CD4-positive, alpha-beta T cell (primary cell): ENCODE measurements at regions of chr2 and their contacts with region 1.

Region 1: GRCh38 chr2:30404319-30404953 is 42.6 kb upstream of the LCLAT1 start:
- DNase-seq: no peak
- ATAC-seq: no peak
- H3K4me3 ChIP-seq: no peak overlapping the region
- H3K4me3 Mint-ChIP-seq: no peak overlapping the region
- H3K27ac ChIP-seq: no peak overlapping the region
- H3K27ac Mint-ChIP-seq: no peak overlapping the region
- H3K4me1 ChIP-seq: peaks cover 11% of the 10 kb centered on the region
- H3K4me1 Mint-ChIP-seq: peaks cover 45% of the 10 kb centered on the region
- H3K27me3 ChIP-seq: no peaks in the 10 kb centered on the region
- H3K27me3 Mint-ChIP-seq: no peaks in the 10 kb centered on the region
- CTCF ChIP-seq: no peak

Region 2: GRCh38 chr2:30436859-30437435 is 32.5 kb after region 1 on chr2:
- CTCF ChIA-PET with region 1: no interaction called
- POLR2A ChIA-PET with region 1: no interaction called
- intact Hi-C with region 1: no loop called
- DNase-seq: peak in 1 of 14 experiments; percentile 8
- ATAC-seq: no peak
- H3K4me3 ChIP-seq: no peak overlapping the region
- H3K4me3 Mint-ChIP-seq: no peak overlapping the region
- H3K27ac ChIP-seq: peak overlapping the region in 1 of 2 donors; percentile 11
- H3K27ac Mint-ChIP-seq: no peak overlapping the region
- H3K4me1 ChIP-seq: peaks cover 7% of the 10 kb centered on the region
- H3K4me1 Mint-ChIP-seq: peaks cover 18% of the 10 kb centered on the region
- H3K27me3 ChIP-seq: no peaks in the 10 kb centered on the region
- H3K27me3 Mint-ChIP-seq: no peaks in the 10 kb centered on the region
- CTCF ChIP-seq: no peak

Region 3: GRCh38 chr2:30455114-30455738 is 50.8 kb after region 1 on chr2:
- CTCF ChIA-PET with region 1: no interaction called
- POLR2A ChIA-PET with region 1: no interaction called
- intact Hi-C with region 1: loop called in 1 of 2 experiments (anchors 10 kb)
- DNase-seq: no peak
- ATAC-seq: no peak
- H3K4me3 ChIP-seq: no peak overlapping the region
- H3K4me3 Mint-ChIP-seq: no peak overlapping the region
- H3K27ac ChIP-seq: no peak overlapping the region
- H3K27ac Mint-ChIP-seq: no peak overlapping the region
- H3K4me1 ChIP-seq: peaks cover 19% of the 10 kb centered on the region
- H3K4me1 Mint-ChIP-seq: peaks cover 68% of the 10 kb centered on the region
- H3K27me3 ChIP-seq: no peaks in the 10 kb centered on the region
- H3K27me3 Mint-ChIP-seq: no peaks in the 10 kb centered on the region
- CTCF ChIP-seq: no peak